ENCODE measurements at regions of chr17 and their contacts with region 1.

Region 1: GRCh38 chr17:48363161-48363560 is 66.9 kb downstream of the SKAP1 start:
- DNase-seq: no peak
- H3K4me3 Mint-ChIP-seq: no peak overlapping the region
- H3K27ac Mint-ChIP-seq: no peak overlapping the region
- H3K4me1 Mint-ChIP-seq: no peaks in the 10 kb centered on the region
- H3K27me3 Mint-ChIP-seq: no peaks in the 10 kb centered on the region

Region 2: DNA sequence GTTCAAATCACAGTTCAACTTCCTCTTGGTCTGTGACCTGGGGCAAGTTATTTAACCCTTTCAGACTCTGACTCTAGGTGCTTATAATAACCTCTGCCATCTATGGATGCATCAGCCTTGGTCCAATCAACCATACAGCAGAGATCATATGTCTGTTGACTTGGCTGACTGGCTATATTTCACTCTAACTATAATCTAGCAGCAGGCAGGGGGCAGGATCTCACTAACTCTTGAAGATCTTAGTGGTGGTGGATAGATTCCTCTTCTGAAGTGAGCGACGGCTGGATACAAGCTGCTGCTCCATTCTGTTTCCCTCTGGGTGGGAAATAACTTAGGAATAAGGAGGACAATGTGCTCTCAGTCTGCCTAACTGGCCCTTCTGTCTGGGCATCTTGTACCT is 79.8 kb before region 1 on chr17:
- CTCF ChIA-PET with region 1: no interaction called
- POLR2A ChIA-PET with region 1: no interaction called
- DNase-seq: no peak
- H3K4me3 Mint-ChIP-seq: no peak overlapping the region
- H3K27ac Mint-ChIP-seq: no peak overlapping the region
- H3K4me1 Mint-ChIP-seq: peaks cover 5% of the 10 kb centered on the region
- H3K27me3 Mint-ChIP-seq: no peaks in the 10 kb centered on the region

Region 3: GRCh38 chr17:48374650-48375230 is 11.6 kb after region 1 on chr17:
- CTCF ChIA-PET with region 1: interaction called, 12 read pairs
- POLR2A ChIA-PET with region 1: interaction called, 3 read pairs
- DNase-seq: peak; percentile 39
- H3K4me3 Mint-ChIP-seq: no peak overlapping the region
- H3K27ac Mint-ChIP-seq: no peak overlapping the region
- H3K4me1 Mint-ChIP-seq: peaks cover 12% of the 10 kb centered on the region
- H3K27me3 Mint-ChIP-seq: no peaks in the 10 kb centered on the region

Measured in activated CD4-positive, alpha-beta memory T cell treated with anti-CD3 and anti-CD28 coated beads, Interleukin-2, amount 10 ng/mL, durations not matched to agents 7 days and 5 days (primary cell).